Gastrocnemius medialis (tissue), 4 donors: ENCODE measurements at regions of chrX and their contacts with region 1.

Region 1: DNA sequence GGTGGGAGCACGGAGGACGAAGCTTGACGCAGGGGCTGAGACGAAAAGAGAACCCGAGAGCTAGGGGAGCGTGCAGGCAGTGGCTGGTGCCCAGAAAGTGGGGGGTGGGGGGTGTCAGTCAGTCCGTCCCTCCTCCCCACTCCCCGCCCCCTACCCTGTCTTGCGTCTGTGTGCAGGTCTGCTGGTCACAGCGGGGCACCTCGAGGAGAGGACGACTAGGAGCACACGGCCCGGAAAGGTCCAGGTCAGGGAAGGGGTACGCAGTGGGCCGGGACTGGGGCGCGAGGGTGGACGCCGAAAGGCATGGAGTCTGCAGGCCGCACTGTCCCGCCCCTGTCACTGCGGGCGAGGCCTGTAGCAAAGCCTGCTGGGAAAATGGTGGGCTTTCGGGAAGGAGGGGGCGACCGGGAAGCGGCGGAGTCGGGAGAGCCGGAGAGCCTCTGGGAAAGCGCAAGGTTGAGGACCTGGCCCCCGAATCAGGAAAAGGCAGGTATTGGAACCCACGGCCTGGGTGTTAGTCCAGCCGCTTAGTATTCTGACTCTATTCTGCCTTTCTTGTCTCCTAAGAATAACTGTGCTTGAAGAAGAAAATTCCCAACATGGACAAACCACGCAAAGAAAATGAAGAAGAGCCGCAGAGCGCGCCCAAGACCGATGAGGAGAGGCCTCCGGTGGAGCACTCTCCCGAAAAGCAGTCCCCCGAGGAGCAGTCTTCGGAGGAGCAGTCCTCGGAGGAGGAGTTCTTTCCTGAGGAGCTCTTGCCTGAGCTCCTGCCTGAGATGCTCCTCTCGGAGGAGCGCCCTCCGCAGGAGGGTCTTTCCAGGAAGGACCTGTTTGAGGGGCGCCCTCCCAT is 769 bp downstream of the TCEAL1 start:
- DNase-seq: peak; percentile 19 to 44
- ATAC-seq: peak; percentile 80 to 83
- H3K4me3 ChIP-seq: peak overlapping the region; percentile 60 to 74 (median 71)
- H3K27ac ChIP-seq: peak overlapping the region; percentile 79 to 95 (median 92)
- H3K4me1 ChIP-seq: peaks cover 5 to 10% of the 10 kb centered on the region in 2 donors
- H3K27me3 ChIP-seq: no peaks in the 10 kb centered on the region
- CTCF ChIP-seq: peak in 3 of 5 experiments; percentile 19 to 47 (median 27)
- POLR2A ChIP-seq: peak in 1 of 2 donors; percentile 23

Region 2: GRCh38 chrX:103533511-103534216 is 95.9 kb before region 1 on chrX:
- in situ Hi-C with region 1: no loop called
- intact Hi-C with region 1: loop called (anchors 1 kb)
- DNase-seq: peak; percentile 15 to 60
- ATAC-seq: peak; percentile 68 to 77
- H3K4me3 ChIP-seq: peak overlapping the region; percentile 40 to 57 (median 48)
- H3K27ac ChIP-seq: peak overlapping the region in 1 of 4 donors; percentile 28
- H3K4me1 ChIP-seq: no peaks in the 10 kb centered on the region
- H3K27me3 ChIP-seq: no peaks in the 10 kb centered on the region
- CTCF ChIP-seq: peak; percentile 54 to 79 (median 67)
- POLR2A ChIP-seq: no peak

Region 3: GRCh38 chrX:103565197-103565596 is 64.3 kb before region 1 on chrX:
- in situ Hi-C with region 1: no loop called
- intact Hi-C with region 1: no loop called
- DNase-seq: no peak
- ATAC-seq: no peak
- H3K4me3 ChIP-seq: no peak overlapping the region
- H3K27ac ChIP-seq: no peak overlapping the region
- H3K4me1 ChIP-seq: no peaks in the 10 kb centered on the region
- H3K27me3 ChIP-seq: no peaks in the 10 kb centered on the region
- CTCF ChIP-seq: no peak
- POLR2A ChIP-seq: no peak

Region 4: GRCh38 chrX:103585411-103586313 is 43.9 kb before region 1 on chrX and contains the start of gene TCEAL4:
- in situ Hi-C with region 1: no loop called
- intact Hi-C with region 1: loop called (anchors 2 kb)
- DNase-seq: peak; percentile 27 to 43
- ATAC-seq: peak; percentile 88 to 94
- H3K4me3 ChIP-seq: peak within 1 kb of the TSS; percentile 61 to 77 (median 68)
- H3K27ac ChIP-seq: peak within 1 kb of the TSS; percentile 79 to 89 (median 88)
- H3K4me1 ChIP-seq: no peaks in the 10 kb centered on the region
- H3K27me3 ChIP-seq: no peaks in the 10 kb centered on the region
- CTCF ChIP-seq: no peak
- POLR2A ChIP-seq: peak; percentile 47 to 51
- total RNA-seq, gene TCEAL4: 21.1 to 30.5 (median 28.2) TPM

Region 5: GRCh38 chrX:104156630-104157529 is 527.3 kb after region 1 on chrX and contains the start of gene SLC25A53:
- in situ Hi-C with region 1: no loop called
- intact Hi-C with region 1: loop called (anchors 5 kb)
- DNase-seq: peak; percentile 66 to 79
- ATAC-seq: peak; percentile 94 to 96
- H3K4me3 ChIP-seq: peak within 1 kb of the TSS; percentile 60 to 72 (median 66)
- H3K27ac ChIP-seq: peak within 1 kb of the TSS; percentile 85 to 94 (median 88)
- H3K4me1 ChIP-seq: peaks cover 6 to 11% of the 10 kb centered on the region in 2 donors
- H3K27me3 ChIP-seq: no peaks in the 10 kb centered on the region
- CTCF ChIP-seq: peak in 1 of 5 experiments; percentile 23
- POLR2A ChIP-seq: peak; percentile 31 to 50
- total RNA-seq, gene SLC25A53: 5.2 to 10.0 (median 7.1) TPM